AG04449 (cell line): ENCODE measurements at regions of chr11 and their contacts with region 1.

Region 1: DNA sequence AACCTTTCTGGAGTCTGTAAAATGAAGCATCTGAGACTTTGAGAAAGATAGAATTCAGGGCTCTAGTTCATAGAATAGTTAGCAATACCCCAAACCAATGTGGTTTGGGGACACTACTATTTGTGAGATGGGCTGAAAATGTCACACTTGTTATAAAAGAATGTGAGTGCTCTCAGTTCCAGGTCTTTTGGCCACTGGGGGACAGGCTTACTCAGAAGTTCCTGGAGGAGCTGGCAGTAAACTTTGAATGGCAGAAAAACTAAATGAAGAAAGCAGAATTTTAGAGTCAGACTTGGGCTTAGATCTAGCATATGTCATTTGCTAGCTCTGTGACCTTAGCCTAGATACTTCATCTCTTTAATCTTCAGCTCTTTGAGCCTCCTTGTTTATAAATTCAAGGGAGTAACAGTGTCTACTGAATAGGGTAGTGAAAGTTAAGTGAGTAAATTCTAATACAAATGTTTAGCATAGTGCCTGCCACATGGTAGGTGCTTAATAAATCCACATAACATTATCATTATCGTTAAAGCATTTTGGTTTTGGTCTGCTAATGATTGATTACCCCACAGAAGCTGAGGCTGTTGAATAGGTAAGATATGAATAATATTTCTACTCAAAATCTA is 3.7 kb downstream of the LYVE1 start:
- DNase-seq: no peak
- H3K4me3 ChIP-seq: no peak overlapping the region
- CTCF ChIP-seq: peak; percentile 32

Region 2: DNA sequence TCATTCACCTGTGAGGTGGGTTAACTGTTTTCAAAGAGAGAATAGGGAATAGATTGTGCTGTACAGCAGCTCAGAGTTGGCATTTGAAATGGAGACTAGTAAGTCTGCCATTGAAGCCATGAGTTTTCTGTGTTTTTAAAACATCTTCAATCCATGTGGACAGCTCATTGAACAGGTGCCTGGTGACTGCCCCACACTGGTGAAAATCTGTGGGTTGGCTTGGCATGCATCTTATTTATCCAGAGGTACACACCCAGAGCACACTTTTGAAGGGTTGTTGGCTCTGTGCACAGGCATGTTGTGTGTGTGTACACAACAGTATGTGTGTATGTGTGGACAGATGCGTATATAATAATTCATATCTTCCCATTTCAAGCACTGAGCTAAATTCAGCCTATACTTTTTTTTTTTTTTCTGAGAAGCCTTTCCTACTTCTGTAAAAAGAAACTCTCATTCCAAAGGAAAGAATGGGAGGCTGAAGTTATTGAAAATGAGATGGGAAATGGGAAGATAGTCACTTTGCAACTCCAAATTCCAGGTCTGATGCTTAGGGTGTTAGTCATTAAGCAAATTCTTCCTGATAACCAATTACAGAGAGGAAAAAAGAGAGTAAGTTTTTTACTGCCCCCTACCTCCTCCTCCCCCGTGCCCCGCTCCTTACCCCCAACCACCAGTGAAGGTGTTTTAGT is 10.7 kb after region 1 on chr11:
- CTCF ChIA-PET with region 1: interaction called, 22 read pairs
- POLR2A ChIA-PET with region 1: no interaction called
- DNase-seq: no peak
- H3K4me3 ChIP-seq: no peak overlapping the region
- CTCF ChIP-seq: no peak